ENCODE measurements at regions of chr15 and their contacts with region 1.

Region 1: GRCh38 chr15:86756692-86757091 is 677.0 kb downstream of the AGBL1 start:
- DNase-seq: no peak
- H3K4me3 Mint-ChIP-seq: no peak overlapping the region
- H3K27ac Mint-ChIP-seq: no peak overlapping the region
- H3K4me1 Mint-ChIP-seq: no peaks in the 10 kb centered on the region
- H3K27me3 Mint-ChIP-seq: no peaks in the 10 kb centered on the region
- CTCF ChIP-seq: peak; percentile 23

Region 2: GRCh38 chr15:85858586-85859375 is 897.9 kb before region 1 on chr15:
- CTCF ChIA-PET with region 1: no interaction called
- POLR2A ChIA-PET with region 1: no interaction called
- intact Hi-C with region 1: loop called (anchors 2 kb)
- DNase-seq: peak; percentile 73
- H3K4me3 Mint-ChIP-seq: no peak overlapping the region
- H3K27ac Mint-ChIP-seq: no peak overlapping the region
- H3K4me1 Mint-ChIP-seq: no peaks in the 10 kb centered on the region
- H3K27me3 Mint-ChIP-seq: peaks cover 32% of the 10 kb centered on the region
- CTCF ChIP-seq: peak; percentile 89

Region 3: DNA sequence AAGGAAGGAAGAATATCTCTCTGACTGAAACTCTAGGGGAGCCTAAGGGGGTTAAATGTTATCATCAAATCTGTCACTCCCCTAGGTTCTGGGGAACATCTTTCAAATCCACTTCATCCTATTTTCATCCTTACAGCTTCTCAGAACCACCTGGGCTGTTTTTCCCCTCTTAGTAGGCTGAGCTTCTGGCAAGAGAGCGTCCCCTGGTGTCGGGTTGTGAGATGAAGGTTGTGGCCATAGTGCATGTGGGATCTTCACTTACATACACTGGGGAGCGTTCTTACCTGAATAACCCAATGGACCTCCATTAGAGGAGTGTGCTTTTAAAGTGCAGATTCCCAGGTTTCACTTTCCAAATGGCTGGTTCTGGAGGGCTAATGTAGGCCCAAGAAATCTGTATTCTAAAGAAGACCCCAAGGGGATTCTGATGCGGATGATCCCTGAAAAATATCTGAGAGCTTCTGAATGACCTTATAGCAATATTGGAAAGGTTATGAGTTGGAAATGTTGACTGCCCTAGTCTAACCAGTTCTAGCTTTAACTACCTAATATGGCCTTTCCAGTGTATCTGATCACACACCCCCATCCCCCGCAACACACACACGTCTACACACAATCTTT is 13.3 kb before region 1 on chr15:
- CTCF ChIA-PET with region 1: interaction called, 25 read pairs
- POLR2A ChIA-PET with region 1: no interaction called
- intact Hi-C with region 1: no loop called
- DNase-seq: peak; percentile 55
- H3K4me3 Mint-ChIP-seq: no peak overlapping the region
- H3K27ac Mint-ChIP-seq: no peak overlapping the region
- H3K4me1 Mint-ChIP-seq: no peaks in the 10 kb centered on the region
- H3K27me3 Mint-ChIP-seq: no peaks in the 10 kb centered on the region
- CTCF ChIP-seq: peak; percentile 90

Measured in MCF 10A (cell line).